Naive thymus-derived CD8-positive, alpha-beta T cell (primary cell): ENCODE measurements at regions of chr17 and their contacts with region 1.

Region 1: DNA sequence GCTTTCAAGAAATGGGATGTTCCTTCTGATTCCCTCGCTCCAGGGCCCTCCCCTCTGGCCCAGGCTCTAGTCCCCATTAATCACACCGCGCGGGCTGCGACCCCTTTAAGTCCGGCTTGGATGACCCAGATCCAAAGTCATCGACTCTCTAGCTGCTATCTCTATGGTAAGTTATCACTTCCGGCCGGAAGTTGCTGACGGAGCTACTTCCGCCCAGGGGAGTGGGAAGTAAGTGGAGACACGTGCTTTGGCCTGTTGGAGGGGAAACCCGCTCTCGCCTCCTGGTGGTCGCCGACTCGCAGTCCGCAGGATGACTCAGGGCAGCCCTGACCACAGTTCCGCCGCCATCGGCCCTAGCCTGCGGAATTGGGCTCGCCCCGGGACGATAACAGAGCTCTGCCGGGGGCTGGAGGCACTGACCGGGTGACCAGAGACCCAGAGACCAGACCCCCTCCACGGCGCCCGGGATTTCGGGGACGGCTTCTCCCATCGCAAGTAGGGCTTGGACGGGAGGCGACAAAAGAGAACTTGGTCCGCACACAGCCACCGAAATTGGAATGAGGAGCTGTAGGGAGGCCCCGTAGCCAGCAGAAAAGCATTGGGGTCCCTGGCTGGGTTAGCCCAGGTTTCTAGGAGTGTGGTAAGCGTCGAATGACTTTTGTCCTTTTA is 52.2 kb upstream of the SEC14L1 start:
- DNase-seq: peak; percentile 61 to 92 (median 84)
- ATAC-seq: peak; percentile 91 to 92
- H3K4me3 Mint-ChIP-seq: peak overlapping the region; percentile 87 to 100 (median 97)
- H3K27ac Mint-ChIP-seq: peak overlapping the region; percentile 94 to 99 (median 99)
- H3K4me1 Mint-ChIP-seq: peaks cover 19 to 62% (median 50%) of the 10 kb centered on the region in 4 donors
- H3K27me3 Mint-ChIP-seq: peaks cover 0 to 7% (median 0%) of the 10 kb centered on the region in 5 donors

Region 2: DNA sequence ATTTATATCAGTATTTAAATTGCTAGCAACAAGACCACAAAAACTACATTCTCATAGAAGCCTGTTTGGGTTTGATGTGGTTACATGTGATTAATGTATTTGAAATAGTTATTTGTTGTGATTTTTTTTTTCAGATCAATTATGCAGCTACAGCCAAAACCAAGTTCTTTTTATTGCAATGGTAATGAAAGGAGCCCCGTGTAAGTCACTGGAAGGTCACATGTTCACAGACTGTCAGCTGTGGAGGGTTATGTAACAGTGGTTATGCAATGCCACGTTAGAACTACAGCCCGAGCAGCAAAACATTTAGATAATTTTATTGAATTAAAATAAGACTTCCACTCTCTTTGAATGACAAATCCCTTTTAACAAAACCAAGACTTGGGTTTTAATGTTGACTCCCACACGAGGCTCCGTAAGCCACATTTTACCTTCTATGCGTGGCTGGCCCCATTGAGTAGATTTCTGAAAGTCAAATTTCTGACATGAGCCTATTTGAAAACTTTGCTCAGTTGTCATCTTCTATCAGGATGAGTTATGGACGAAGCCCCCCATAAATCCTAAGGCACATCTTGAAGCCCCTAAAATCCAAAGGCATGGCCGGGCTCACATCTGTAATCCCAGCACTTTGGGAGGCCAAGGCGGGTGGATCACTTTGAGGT is 10.4 kb after region 1 on chr17:
- POLR2A ChIA-PET with region 1: interaction called, 18 read pairs
- DNase-seq: peak in 8 of 10 donors; percentile 42 to 82 (median 70)
- ATAC-seq: peak; percentile 95 to 98
- H3K4me3 Mint-ChIP-seq: peak overlapping the region; percentile 34 to 70 (median 56)
- H3K27ac Mint-ChIP-seq: peak overlapping the region; percentile 91 to 99 (median 94)
- H3K4me1 Mint-ChIP-seq: peaks cover 21 to 42% (median 36%) of the 10 kb centered on the region in 4 donors
- H3K27me3 Mint-ChIP-seq: no peaks in the 10 kb centered on the region

Region 3: GRCh38 chr17:77127735-77128361 is 39.3 kb after region 1 on chr17:
- POLR2A ChIA-PET with region 1: interaction called, 12 read pairs
- DNase-seq: peak; percentile 42 to 94 (median 79)
- ATAC-seq: peak; percentile 92 to 95
- H3K4me3 Mint-ChIP-seq: peak overlapping the region; percentile 70 to 89 (median 78)
- H3K27ac Mint-ChIP-seq: peak overlapping the region; percentile 88 to 98 (median 96)
- H3K4me1 Mint-ChIP-seq: peaks cover 12 to 40% (median 28%) of the 10 kb centered on the region in 4 donors
- H3K27me3 Mint-ChIP-seq: no peaks in the 10 kb centered on the region

Region 4: DNA sequence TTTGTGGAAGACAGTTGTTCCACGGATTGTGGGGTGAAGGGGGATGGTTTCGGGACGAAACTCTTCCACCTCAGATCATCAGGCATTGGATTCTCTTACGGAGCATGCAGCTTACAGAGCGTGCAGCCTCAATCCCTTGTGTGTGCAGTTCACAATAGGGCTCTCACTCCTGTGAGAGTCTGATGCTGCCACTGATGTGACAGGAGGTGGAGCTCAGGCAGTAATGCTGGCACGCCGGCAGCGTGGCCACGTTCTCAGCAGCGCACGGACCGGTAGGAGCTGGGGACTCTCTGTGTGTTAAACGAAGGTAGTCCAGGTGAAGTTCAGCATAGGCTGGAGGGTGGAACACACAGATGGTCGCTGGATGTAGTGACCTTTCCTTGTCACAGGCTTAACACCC is 90.0 kb after region 1 on chr17:
- POLR2A ChIA-PET with region 1: no interaction called
- DNase-seq: no peak
- ATAC-seq: no peak
- H3K4me3 Mint-ChIP-seq: no peak overlapping the region
- H3K27ac Mint-ChIP-seq: peak overlapping the region in 6 of 10 donors; percentile 16 to 80 (median 59)
- H3K4me1 Mint-ChIP-seq: peaks cover 21 to 46% (median 36%) of the 10 kb centered on the region in 4 donors
- H3K27me3 Mint-ChIP-seq: no peaks in the 10 kb centered on the region